Cardiac septum (tissue), 1 donor: ENCODE measurements at regions of chr17 and their contacts with region 1.

Region 1: GRCh38 chr17:35119368-35120165 is at the start of gene RAD51D:
- DNase-seq: peak; percentile 88
- total RNA-seq, gene RAD51D: 6.5 TPM

Region 2: DNA sequence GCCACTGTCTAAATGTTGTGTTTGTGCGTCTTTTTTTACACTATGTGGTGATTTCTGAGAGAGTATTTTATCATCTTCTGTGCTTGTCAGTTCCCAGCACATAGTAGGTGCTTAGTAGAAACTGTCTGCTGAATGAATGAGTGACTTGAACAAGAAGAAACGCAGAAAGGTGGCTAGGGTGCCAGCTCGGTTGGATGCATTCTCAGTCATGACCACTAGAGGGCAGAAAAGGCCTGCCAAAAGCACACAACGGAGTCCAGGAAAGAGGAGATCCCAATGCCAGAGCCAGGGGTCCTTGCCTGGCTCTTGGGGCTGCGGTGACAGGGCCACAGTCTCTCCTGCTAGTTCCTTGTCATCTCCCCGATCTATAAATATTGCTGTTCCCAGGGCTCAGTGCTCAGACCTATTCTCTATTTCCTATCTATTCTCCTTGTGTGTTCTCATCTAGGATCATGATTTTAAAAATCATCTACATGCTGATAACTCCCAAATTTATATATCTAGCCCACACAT is 699.3 kb before region 1 on chr17:
- intact Hi-C with region 1: loop called (anchors 5 kb)
- DNase-seq: no peak

Region 3: DNA sequence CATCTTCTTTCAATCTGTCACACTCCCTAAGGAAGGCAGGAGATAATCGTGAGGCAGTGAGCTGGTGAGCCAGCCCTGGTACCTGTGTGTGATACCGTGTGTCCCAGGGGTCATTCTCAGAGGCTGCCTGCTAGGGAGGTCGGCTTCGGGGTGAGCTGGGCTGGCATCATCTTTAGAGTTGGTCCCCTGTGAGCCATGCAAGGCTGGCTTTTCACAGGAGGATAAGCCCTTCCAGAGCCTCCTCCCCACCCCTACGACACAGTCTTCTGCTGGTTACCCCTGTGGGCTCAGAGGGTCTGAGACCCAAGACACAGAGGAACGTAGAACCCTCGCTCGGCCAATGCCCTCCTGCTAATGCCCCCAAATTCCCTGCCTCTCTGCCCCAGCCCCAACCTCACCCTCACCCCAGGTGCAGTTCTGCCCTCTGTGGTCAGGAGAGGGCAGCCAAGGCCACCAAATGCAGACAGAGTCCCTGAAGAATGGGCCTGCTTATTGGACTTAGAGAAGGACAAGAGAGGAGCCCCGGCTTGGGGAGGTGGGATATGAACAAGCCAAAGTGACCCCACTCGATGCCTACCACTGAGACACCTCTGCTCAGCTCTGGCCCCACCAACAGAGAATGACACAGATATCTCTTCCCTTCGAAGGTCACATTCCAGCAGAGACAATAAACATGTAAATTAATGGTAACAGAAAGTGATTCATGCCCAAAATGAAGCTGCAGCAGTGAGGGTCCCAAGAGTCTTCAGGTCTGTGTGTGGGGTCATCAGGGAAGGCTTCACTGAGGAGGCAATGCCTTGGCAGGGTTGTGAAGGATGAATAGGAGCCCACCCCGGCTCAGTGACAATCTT is 675.7 kb before region 1 on chr17:
- intact Hi-C with region 1: loop called (anchors 5 kb)
- DNase-seq: no peak

Region 4: DNA sequence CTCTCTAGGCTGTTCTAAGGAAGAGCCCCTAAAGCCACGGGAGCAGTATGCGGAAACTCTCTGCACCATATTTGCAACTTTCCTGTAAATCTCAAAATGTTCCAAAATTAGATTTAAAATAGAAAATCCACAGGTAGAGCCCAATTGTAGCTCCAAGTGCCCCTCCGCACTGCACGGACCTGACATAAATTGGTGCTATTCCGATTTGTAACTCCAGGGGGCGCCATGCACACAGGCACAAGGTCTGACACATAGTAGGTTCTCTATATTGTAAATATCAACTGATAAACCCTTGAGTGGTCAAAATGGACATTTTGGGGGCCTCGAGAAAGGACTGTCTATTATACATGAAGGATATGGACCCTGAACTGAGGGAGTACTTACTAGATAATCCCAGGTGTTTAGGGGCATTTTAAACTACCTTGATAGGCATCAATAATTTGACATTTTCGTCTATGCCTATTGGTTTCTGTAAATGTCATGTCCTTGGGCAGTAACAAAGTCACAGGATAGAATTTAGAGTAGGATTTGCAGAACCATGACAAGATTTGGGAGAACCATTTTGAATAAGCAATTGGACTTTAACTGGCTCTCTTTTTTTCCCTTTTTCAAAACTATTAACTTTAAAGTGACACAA is 576.7 kb before region 1 on chr17:
- intact Hi-C with region 1: loop called (anchors 5 kb)
- DNase-seq: no peak

Region 5: DNA sequence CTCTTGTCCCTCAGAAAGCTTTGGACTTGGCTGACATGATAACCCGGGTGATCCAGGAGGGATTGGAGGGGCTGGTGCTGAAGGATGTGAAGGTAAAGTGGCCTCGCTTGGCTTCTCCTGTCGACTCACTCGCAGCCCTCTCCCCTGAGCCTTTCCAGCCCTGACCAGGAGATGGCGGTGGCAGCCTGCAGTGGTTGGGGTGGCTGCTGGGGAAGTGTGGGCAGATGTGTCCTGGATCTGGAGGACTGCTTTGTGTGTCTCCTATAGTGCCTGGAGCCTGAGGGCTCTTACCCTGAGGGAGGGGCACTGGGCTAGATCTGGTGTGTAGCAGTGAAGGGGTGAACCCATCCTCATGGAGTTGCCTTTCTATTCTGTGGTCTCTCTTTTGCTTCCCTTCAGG is 121.4 kb before region 1 on chr17:
- intact Hi-C with region 1: loop called (anchors 2 kb)
- DNase-seq: peak; percentile 93